ENCODE measurements at regions of chr15 and their contacts with region 1.

Region 1: DNA sequence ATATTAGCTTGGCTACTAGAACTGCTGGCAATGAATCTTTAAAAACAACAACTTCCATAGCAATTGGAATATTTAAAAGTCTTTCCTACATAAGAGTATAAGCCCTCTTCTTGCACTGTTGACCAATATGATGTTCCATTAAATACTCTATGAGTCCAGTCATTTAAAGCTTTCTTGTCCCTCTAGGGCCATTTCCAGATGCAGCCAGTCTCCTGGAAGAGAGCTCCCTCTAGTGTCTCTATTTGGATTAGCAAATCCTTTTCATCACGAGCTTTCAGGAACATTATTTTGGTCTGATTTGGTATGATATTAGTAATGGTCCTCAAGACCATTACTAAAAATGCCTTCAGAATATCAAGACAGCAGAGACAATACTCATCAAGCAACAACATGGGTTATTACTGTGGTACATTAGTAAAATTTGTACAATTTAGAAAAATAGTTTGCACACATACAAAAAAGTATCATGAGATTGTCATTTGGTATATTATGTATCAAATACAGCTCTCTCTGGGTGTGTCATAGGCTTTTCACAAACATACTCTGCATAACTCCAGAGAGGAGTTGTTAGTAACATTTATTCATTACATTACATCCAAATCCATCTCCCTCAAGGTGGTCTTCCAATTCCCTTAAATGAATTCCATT is 101.3 kb downstream of the DPH6 start:
- DNase-seq: no peak
- ATAC-seq: no peak
- H3K4me3 Mint-ChIP-seq: no peak overlapping the region
- H3K27ac Mint-ChIP-seq: no peak overlapping the region
- H3K4me1 Mint-ChIP-seq: no peaks in the 10 kb centered on the region
- H3K27me3 Mint-ChIP-seq: no peaks in the 10 kb centered on the region
- CTCF ChIP-seq: peak; percentile 46

Region 2: GRCh38 chr15:35078221-35078915 is 366.3 kb before region 1 on chr15:
- CTCF ChIA-PET with region 1: interaction called, 12 read pairs
- POLR2A ChIA-PET with region 1: no interaction called
- intact Hi-C with region 1: loop called (anchors 1 kb)
- DNase-seq: no peak
- ATAC-seq: no peak
- H3K4me3 Mint-ChIP-seq: no peak overlapping the region
- H3K27ac Mint-ChIP-seq: no peak overlapping the region
- H3K4me1 Mint-ChIP-seq: no peaks in the 10 kb centered on the region
- H3K27me3 Mint-ChIP-seq: no peaks in the 10 kb centered on the region
- CTCF ChIP-seq: no peak

Region 3: DNA sequence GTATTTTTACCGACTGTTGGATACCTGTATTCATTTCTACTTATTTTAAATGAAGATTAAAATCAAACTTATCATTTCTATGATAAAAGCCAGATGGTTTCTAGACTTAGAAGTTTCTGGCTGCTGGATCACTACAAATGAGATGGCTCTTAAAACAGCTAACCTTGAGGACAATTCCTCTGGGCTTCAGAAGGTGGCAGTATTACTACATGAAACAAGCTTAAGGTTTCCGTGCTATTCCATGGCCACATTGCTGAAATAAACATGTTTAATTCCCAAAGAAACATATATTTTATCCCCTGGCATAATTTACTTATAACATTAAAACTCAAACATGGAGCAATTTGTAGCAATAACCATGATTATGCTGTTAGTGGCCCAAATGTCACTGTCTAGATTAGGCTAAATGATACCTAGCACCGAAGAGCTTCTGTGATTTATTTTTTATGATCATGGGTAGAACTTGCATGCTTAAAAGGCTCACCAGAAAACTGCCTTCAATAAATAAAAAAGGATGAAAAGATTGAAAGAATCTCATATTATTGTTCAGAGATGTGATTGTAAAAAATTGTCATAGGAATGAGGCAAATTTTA is 155.6 kb before region 1 on chr15:
- CTCF ChIA-PET with region 1: interaction called, 22 read pairs
- POLR2A ChIA-PET with region 1: no interaction called
- intact Hi-C with region 1: loop called (anchors 2 kb)
- DNase-seq: no peak
- ATAC-seq: no peak
- H3K4me3 Mint-ChIP-seq: no peak overlapping the region
- H3K27ac Mint-ChIP-seq: no peak overlapping the region
- H3K4me1 Mint-ChIP-seq: no peaks in the 10 kb centered on the region
- H3K27me3 Mint-ChIP-seq: no peaks in the 10 kb centered on the region
- CTCF ChIP-seq: peak; percentile 23